A549 (cell line): ENCODE measurements at regions of chr12 and their contacts with region 1.

Region 1: GRCh38 chr12:69254046-69254445 is 14.7 kb downstream of the CPSF6 start:
- DNase-seq: peak; percentile 13 to 64
- ATAC-seq: peak in 1 of 2 experiments; percentile 61; a peak in 2 of 6 replicates
- H3K4me3 ChIP-seq: no peak overlapping the region
- H3K27ac ChIP-seq: no peak overlapping the region
- H3K4me1 ChIP-seq: 0 out of 3 replicates have a peak, but pooled peaks cover 4% of the 10 kb centered on the region
- CTCF ChIP-seq: peak; percentile 72
- EP300 ChIP-seq: no peak
- POLR2A ChIP-seq: no peak
- RAD21 ChIP-seq: peak; percentile 50 to 55

Region 2: DNA sequence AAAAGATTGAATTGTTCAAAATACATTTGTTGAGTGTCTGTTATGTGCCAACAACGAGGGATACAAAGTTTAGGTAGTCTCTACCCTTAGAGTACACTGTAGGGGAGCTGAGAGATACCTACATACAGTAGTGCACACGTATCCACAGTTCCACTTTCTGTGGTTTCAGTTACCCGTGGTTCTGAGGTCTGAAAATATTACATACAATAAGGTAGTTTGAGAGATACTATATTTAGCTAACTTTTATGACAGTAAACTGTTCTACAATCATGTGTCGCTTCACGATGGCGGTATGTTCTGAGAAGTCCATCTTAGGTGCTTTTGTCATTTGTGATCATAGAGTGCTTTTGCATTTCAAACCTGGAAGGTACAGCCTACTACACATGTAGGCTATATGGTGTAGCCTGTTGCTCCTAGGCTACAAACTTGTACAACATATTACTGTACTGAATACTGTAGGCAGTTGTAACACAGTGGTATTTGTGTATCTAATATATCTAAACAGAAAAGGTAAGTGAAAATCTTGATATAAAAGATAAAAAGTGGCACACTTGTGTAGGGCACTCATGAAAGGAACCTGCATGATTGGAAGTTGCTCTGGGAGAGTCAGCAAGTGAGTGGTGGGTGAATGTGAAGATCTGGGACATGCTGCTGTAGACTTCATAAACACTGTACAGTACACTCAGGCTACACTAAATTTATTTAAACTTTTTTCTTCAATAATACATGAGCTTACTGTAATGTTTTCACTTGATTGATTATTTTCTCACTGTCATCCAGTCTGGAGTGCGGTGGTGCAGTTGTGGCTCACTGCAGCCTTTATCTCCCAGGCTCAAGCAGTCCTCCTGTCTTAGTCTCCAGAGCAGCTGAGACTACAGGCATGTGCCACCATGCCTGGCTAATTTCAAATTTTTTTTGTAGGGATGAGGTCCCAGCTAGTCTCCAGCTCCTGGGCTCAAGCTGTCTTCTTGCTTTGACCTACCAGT is 10.7 kb before region 1 on chr12:
- CTCF ChIA-PET with region 1: interaction called, 10 read pairs
- POLR2A ChIA-PET with region 1: interaction called, 3 read pairs
- DNase-seq: no peak
- ATAC-seq: no peak
- H3K4me3 ChIP-seq: no peak overlapping the region
- H3K27ac ChIP-seq: no peak overlapping the region
- H3K4me1 ChIP-seq: peaks cover 43% of the 10 kb centered on the region; the same call in 2 of the 3 replicates
- CTCF ChIP-seq: no peak
- EP300 ChIP-seq: no peak
- POLR2A ChIP-seq: no peak
- RAD21 ChIP-seq: no peak

Region 3: GRCh38 chr12:69442894-69443293 is 188.8 kb after region 1 on chr12:
- CTCF ChIA-PET with region 1: no interaction called
- POLR2A ChIA-PET with region 1: no interaction called
- DNase-seq: no peak
- ATAC-seq: no peak
- H3K4me3 ChIP-seq: no peak overlapping the region
- H3K27ac ChIP-seq: no peak overlapping the region
- H3K4me1 ChIP-seq: no peaks in the 10 kb centered on the region
- CTCF ChIP-seq: no peak
- EP300 ChIP-seq: no peak
- POLR2A ChIP-seq: no peak
- RAD21 ChIP-seq: no peak